ENCODE measurements at regions of chr5 and their contacts with region 1.

Region 1: GRCh38 chr5:176716320-176716719 is 69.0 kb downstream of the TSPAN17 start:
- DNase-seq: no peak
- ATAC-seq: no peak

Region 2: DNA sequence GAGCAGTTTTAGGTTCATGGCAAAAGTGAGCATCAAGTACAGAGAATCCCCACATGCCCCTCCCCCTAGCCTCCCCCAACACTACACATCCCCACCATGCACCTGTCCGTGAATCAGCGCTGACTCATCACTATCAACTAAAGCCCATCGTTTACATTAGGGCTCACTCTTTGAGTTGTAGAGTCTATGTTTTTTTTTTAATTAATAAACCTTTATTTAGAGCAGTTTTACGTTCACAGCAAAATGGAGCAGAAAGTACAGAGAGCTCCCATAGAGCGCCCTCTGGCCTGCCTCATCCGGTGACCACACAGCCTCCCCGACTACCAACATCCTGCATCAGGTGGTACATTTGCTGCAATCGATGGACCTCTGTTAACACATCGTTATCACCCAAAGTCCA is 46.2 kb after region 1 on chr5:
- intact Hi-C with region 1: loop called (anchors 2 kb)
- DNase-seq: no peak
- ATAC-seq: no peak

Region 3: GRCh38 chr5:176774216-176775170 is 58.2 kb after region 1 on chr5:
- intact Hi-C with region 1: no loop called
- DNase-seq: no peak
- ATAC-seq: no peak

Region 4: GRCh38 chr5:176817841-176818377 is 101.6 kb after region 1 on chr5:
- intact Hi-C with region 1: no loop called
- DNase-seq: no peak
- ATAC-seq: peak; percentile 18

Region 5: GRCh38 chr5:176870110-176870593 is 153.8 kb after region 1 on chr5:
- intact Hi-C with region 1: no loop called
- DNase-seq: no peak
- ATAC-seq: peak; percentile 66

Measured in Right ventricle myocardium superior (tissue), 1 donor.